Uterus (tissue), 4 donors: ENCODE measurements at regions of chr3 and their contacts with region 1.

Region 1: DNA sequence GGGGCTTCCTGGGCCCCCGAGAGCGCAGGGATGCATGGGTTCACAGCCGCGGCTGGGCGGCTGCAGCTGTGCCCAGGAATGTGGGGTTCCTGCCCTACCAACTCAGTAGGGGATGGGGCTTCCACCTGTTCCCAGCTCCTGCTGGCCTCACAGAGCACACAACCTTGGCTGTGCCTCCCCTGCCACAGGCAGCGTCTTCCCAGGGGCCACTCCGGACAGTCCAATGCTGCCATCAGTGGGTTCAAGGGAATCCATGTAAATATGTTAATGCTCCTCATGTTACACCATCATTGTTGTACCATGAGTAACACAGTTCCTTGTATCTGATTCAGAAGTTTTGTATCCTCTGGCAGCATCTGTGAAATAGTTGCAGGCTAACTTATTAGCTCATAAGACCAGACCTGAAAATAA is 12.1 kb upstream of the SIAH2 start:
- DNase-seq: no peak
- H3K4me3 ChIP-seq: no peak overlapping the region
- H3K27ac ChIP-seq: no peak overlapping the region
- H3K4me1 ChIP-seq: no peaks in the 10 kb centered on the region
- H3K27me3 ChIP-seq: no peaks in the 10 kb centered on the region
- CTCF ChIP-seq: no peak
- POLR2A ChIP-seq: no peak

Region 2: GRCh38 chr3:150666167-150666566 is 108.9 kb before region 1 on chr3:
- intact Hi-C with region 1: no loop called
- DNase-seq: no peak
- H3K4me3 ChIP-seq: no peak overlapping the region
- H3K27ac ChIP-seq: no peak overlapping the region
- H3K4me1 ChIP-seq: no peaks in the 10 kb centered on the region
- H3K27me3 ChIP-seq: no peaks in the 10 kb centered on the region
- CTCF ChIP-seq: no peak
- POLR2A ChIP-seq: no peak

Region 3: DNA sequence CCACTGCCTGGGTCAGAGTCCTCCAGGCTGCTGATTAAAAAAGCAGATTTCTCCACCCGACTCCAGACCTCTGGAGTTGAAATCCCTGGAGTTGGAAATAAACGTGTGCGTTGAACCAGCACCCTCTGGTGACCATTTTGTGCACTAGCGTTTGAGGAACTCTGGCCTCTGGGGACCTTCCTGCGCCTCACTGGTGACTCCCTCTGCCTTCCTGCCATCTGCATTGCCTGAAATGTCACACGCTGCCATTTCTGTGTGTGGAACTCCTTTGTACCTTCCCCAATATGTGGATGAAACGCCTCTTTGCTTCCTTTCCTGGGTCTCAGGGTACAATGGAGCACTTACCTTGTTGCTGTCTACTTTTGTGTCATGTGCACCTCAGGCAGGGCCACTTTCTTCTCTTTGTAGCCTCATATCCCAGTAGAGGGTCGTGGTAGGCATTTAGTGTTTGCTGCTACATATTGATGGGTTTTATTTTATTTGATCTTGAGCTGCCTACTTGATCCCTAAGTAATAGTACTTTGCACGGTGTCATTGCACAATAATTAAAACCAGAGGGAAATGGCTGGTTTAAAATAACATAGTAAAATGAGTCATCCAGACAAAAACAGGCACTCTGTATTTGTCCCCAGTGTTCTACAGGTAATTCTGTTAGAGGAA is 371.1 kb after region 1 on chr3:
- intact Hi-C with region 1: loop called (anchors 10 kb)
- DNase-seq: peak; percentile 60 to 64
- H3K4me3 ChIP-seq: no peak overlapping the region
- H3K27ac ChIP-seq: no peak overlapping the region
- H3K4me1 ChIP-seq: peaks cover 0 to 5% of the 10 kb centered on the region in 2 donors
- H3K27me3 ChIP-seq: no peaks in the 10 kb centered on the region
- CTCF ChIP-seq: peak; percentile 74 to 88 (median 80)
- POLR2A ChIP-seq: no peak